OCI-LY7 (cell line): ENCODE measurements at regions of chr2 and their contacts with region 1.

Region 1: GRCh38 chr2:8477552-8478470 is 204.0 kb upstream of the ID2 start:
- DNase-seq: peak; percentile 94
- H3K4me3 ChIP-seq: peak overlapping the region; percentile 50
- H3K27ac ChIP-seq: peak overlapping the region; percentile 97
- H3K4me1 ChIP-seq: peaks cover 99% of the 10 kb centered on the region
- CTCF ChIP-seq: no peak

Region 2: DNA sequence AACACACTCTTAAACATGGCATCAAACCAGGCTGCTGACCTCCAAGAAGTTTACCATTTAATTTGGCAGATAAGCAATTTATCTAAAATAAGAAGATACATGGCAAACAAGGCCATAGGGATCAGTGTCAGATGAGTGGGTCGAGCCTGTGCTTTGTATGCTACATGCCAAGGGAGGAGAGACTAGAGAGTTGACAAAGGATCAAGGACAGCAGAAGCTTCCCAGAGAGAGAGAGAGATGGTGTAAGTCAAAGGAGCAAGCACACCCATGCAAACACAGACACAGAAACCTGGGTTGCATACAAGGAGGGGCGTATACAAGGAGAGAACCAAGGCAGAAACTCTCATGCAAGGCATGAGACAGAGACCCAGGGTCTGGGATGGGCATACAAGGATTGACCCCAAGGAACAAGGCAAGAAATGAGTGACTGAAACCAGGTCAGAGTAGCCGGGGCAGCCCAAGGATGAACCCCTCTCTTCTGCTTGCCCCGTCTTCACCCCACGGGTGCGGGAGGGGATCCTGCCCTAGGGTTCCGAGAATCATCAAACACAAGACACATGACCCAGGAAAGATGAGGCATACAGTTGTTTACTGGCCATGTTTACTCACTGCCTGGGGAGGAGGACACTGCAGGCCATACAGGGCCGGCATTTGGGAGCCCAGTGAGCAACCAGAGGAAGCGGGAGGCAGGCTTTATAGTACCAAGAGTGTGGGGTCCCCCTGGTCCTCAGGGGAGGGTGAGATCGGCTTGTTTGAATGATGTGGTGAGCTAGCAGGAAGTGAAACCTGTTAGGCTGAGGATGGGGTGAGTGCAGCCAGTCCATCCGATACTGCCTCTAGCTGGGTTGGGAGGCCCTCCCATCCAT is 325.2 kb before region 1 on chr2:
- CTCF ChIA-PET with region 1: no interaction called
- POLR2A ChIA-PET with region 1: no interaction called
- intact Hi-C with region 1: no loop called
- DNase-seq: peak; percentile 86
- H3K4me3 ChIP-seq: peak overlapping the region; percentile 32
- H3K27ac ChIP-seq: no peak overlapping the region
- H3K4me1 ChIP-seq: peaks cover 28% of the 10 kb centered on the region
- CTCF ChIP-seq: no peak

Region 3: DNA sequence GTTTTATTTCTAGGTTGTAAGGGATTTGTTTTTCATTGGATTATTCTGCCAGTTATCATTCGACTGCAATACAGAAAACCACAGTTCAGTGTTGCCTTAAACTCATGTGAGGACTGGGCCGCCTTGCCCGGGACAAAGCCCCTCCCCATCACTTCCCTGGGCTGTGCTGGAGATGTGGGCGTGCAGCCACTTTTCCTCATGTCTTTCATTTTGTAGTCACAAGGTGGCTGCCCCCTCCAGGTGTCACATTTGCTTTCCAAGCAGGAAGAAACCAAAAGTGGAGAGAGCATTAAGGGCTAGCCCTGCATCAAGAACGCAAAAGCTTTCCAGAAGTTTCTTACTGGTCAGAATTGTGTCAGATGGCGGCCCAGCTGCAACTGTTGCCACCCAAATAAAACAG is 288.5 kb before region 1 on chr2:
- CTCF ChIA-PET with region 1: no interaction called
- POLR2A ChIA-PET with region 1: no interaction called
- intact Hi-C with region 1: no loop called
- DNase-seq: no peak
- H3K4me3 ChIP-seq: no peak overlapping the region
- H3K27ac ChIP-seq: no peak overlapping the region
- H3K4me1 ChIP-seq: peaks cover 9% of the 10 kb centered on the region
- CTCF ChIP-seq: no peak

Region 4: GRCh38 chr2:8303322-8303832 is 174.4 kb before region 1 on chr2:
- CTCF ChIA-PET with region 1: no interaction called
- POLR2A ChIA-PET with region 1: interaction called, 5 read pairs
- intact Hi-C with region 1: loop called (anchors 1 kb)
- DNase-seq: peak; percentile 96
- H3K4me3 ChIP-seq: peak overlapping the region; percentile 36
- H3K27ac ChIP-seq: peak overlapping the region; percentile 76
- H3K4me1 ChIP-seq: peaks cover 71% of the 10 kb centered on the region
- CTCF ChIP-seq: peak; percentile 70

Region 5: DNA sequence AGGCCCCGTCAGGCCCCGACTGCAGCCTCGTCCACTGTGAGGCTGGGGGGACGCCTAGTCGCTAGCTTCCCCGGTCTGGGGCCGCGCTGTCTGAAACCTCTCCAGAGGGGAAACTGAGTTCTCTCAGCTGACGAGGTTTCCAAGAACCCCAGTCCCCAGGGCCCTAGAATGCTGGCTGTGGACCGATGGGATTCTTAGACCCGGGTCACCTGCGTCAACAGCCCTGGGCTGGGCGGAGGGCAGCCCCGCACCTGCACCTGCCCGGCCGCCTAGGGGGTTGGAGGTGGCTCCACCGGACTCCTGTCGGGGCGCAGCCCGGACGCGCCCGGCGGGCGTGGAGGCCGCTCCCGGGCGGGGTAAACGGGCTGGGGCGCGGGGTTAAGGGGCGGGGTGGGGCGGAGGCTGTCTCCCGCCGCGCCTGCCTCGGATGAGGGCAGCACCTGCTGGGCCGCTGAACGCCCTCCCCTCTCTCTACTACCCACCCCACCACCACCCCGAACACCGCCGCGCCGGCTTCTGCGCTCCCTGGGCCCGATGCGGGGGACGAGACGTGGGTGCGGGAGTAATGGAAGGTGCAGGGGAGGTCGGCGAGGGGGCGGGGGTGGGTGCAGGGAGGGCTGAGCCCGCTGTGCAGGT is 20.8 kb before region 1 on chr2:
- CTCF ChIA-PET with region 1: no interaction called
- POLR2A ChIA-PET with region 1: no interaction called
- intact Hi-C with region 1: no loop called
- DNase-seq: no peak
- H3K4me3 ChIP-seq: no peak overlapping the region
- H3K27ac ChIP-seq: no peak overlapping the region
- H3K4me1 ChIP-seq: peaks cover 25% of the 10 kb centered on the region
- CTCF ChIP-seq: no peak

Region 6: GRCh38 chr2:8494589-8494988 is 16.8 kb after region 1 on chr2:
- CTCF ChIA-PET with region 1: interaction called, 3 read pairs
- POLR2A ChIA-PET with region 1: interaction called, 28 read pairs
- intact Hi-C with region 1: no loop called
- DNase-seq: no peak
- H3K4me3 ChIP-seq: no peak overlapping the region
- H3K27ac ChIP-seq: no peak overlapping the region
- H3K4me1 ChIP-seq: peaks cover 45% of the 10 kb centered on the region
- CTCF ChIP-seq: no peak

Region 7: DNA sequence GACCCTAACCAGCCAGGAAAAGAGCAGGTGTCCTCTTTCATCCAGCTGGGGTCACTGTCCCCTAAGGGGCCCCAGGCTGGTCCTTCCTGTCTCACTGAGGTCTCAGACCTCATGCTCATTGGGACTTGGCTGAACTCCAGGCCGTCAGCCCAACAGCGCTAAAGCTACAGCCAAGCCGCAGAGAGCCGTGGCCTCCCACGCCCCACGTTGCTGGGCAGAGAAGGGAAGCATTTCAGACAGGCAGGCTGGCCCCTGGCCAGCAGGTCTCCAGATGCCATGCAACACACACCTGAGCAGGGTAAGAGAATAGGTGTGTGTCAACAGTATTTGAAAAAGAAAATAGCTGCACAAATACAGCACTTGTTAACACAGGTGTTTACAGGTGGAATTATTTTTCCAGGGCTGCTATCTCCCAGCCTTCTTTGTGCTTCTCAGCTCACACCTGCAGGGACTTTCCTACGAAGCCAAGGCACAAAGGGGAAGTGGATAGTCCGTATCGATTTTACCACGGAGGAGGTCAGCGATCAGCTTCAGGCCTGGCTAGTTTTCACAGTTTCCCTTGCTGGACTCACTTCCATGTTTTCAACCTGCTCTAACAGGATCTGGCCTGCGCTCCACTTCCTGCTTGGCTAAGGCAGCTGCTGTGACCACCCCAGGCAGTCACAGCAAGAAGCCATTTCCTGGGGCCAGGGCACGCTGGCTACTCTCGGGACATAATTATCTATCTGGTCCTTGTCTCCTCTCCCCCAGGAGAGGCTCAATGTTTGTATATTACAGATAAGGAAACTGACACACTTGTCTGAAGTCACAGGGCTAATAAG is 48.0 kb after region 1 on chr2:
- CTCF ChIA-PET with region 1: interaction called, 7 read pairs
- POLR2A ChIA-PET with region 1: interaction called, 67 read pairs
- intact Hi-C with region 1: loop called (anchors 1 kb)
- DNase-seq: peak; percentile 82
- H3K4me3 ChIP-seq: peak overlapping the region; percentile 37
- H3K27ac ChIP-seq: peak overlapping the region; percentile 95
- H3K4me1 ChIP-seq: peaks cover 100% of the 10 kb centered on the region
- CTCF ChIP-seq: peak; percentile 60

Region 8: DNA sequence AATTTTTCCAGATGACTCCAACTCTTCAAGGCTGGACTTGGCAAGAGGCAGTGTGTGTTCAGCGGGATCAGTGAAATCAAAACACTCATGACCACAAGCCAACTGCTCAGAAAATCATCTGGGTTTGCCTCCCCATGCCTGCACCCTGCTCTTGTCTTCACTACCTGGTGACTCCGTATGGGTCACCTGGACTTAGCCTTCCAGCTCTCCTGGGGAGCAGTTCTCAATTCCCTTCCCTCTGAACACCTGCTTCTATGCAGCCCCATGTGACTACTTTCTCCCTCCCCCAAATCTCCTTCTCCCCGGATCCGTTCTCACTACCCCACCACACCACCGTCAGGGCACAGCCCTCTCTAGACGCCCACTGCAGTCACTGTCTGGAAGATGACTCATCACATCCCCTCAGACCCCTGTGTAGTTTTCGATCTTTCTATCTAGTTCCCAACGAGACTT is 73.8 kb after region 1 on chr2:
- CTCF ChIA-PET with region 1: no interaction called
- POLR2A ChIA-PET with region 1: interaction called, 6 read pairs
- intact Hi-C with region 1: loop called (anchors 2 kb)
- DNase-seq: peak; percentile 78
- H3K4me3 ChIP-seq: peak overlapping the region; percentile 62
- H3K27ac ChIP-seq: peak overlapping the region; percentile 98
- H3K4me1 ChIP-seq: peaks cover 97% of the 10 kb centered on the region
- CTCF ChIP-seq: no peak; the same call in 1 of the 2 replicates

Region 9: GRCh38 chr2:8598295-8599165 is 120.7 kb after region 1 on chr2:
- CTCF ChIA-PET with region 1: no interaction called
- POLR2A ChIA-PET with region 1: no interaction called
- intact Hi-C with region 1: no loop called
- DNase-seq: no peak
- H3K4me3 ChIP-seq: no peak overlapping the region
- H3K27ac ChIP-seq: no peak overlapping the region
- H3K4me1 ChIP-seq: no peaks in the 10 kb centered on the region
- CTCF ChIP-seq: no peak

Region 10: GRCh38 chr2:8628230-8629209 is 150.7 kb after region 1 on chr2:
- CTCF ChIA-PET with region 1: interaction called, 4 read pairs
- POLR2A ChIA-PET with region 1: interaction called, 3 read pairs
- intact Hi-C with region 1: loop called (anchors 2 kb)
- DNase-seq: peak; percentile 78
- H3K4me3 ChIP-seq: peak overlapping the region; percentile 70
- H3K27ac ChIP-seq: peak overlapping the region; percentile 82
- H3K4me1 ChIP-seq: peaks cover 69% of the 10 kb centered on the region
- CTCF ChIP-seq: peak; percentile 81